Activated CD4-positive, alpha-beta memory T cell treated with anti-CD3 and anti-CD28 coated beads for 36 hours (primary cell): ENCODE measurements at regions of chr11 and their contacts with region 1.

Region 1: GRCh38 chr11:125111343-125112207 is at the start of gene TMEM218:
- DNase-seq: peak; percentile 98
- H3K4me3 Mint-ChIP-seq: peak within 1 kb of the TSS; percentile 88
- H3K27ac Mint-ChIP-seq: peak within 1 kb of the TSS; percentile 82
- H3K4me1 Mint-ChIP-seq: peaks cover 13% of the 10 kb centered on the region
- H3K27me3 Mint-ChIP-seq: no peaks in the 10 kb centered on the region
- total RNA-seq, gene TMEM218: 12.8 to 14.8 TPM

Region 2: DNA sequence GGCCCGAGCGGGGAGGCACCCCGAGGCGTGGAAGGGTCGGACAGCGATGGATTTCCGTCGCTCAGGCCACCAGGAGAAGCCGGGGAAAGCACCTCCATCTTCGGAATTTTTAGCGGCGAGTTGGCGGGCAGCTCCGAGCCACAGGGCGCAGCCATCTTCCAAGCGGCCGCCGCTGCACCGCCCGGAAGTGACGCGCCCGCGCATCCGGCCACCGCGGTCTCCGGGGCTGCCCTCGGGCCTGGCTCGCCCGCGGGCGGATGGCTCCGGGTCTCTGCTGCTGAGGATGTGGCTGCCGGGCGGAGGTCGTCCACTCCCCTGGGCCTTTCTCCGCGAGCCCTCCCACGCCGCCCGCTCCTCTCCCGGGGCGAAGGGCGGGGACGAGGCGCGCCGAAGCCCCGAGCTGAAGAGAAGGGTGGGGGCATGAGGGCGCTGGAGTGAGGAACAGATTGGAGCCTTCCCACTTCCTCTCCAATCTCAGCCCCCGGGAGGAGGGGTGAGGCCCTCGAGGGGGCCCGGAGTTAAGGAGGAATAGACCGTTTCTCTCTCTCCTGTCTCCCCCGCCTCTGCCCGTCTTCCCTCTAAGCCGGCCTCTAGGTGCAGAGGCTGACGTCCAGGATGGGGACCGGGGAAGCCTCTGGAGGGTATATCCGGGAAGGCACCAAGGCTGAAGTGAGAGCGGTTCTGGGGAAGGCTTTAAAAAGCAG is 311.2 kb before region 1 on chr11 and contains the start of gene MSANTD2:
- CTCF ChIA-PET with region 1: no interaction called
- POLR2A ChIA-PET with region 1: no interaction called
- intact Hi-C with region 1: loop called (anchors 1 kb)
- DNase-seq: peak; percentile 87
- H3K4me3 Mint-ChIP-seq: peak within 1 kb of the TSS; percentile 89
- H3K27ac Mint-ChIP-seq: peak within 1 kb of the TSS; percentile 94
- H3K4me1 Mint-ChIP-seq: peaks cover 29% of the 10 kb centered on the region
- H3K27me3 Mint-ChIP-seq: no peaks in the 10 kb centered on the region
- total RNA-seq, gene MSANTD2: 6.1 to 6.4 TPM

Region 3: DNA sequence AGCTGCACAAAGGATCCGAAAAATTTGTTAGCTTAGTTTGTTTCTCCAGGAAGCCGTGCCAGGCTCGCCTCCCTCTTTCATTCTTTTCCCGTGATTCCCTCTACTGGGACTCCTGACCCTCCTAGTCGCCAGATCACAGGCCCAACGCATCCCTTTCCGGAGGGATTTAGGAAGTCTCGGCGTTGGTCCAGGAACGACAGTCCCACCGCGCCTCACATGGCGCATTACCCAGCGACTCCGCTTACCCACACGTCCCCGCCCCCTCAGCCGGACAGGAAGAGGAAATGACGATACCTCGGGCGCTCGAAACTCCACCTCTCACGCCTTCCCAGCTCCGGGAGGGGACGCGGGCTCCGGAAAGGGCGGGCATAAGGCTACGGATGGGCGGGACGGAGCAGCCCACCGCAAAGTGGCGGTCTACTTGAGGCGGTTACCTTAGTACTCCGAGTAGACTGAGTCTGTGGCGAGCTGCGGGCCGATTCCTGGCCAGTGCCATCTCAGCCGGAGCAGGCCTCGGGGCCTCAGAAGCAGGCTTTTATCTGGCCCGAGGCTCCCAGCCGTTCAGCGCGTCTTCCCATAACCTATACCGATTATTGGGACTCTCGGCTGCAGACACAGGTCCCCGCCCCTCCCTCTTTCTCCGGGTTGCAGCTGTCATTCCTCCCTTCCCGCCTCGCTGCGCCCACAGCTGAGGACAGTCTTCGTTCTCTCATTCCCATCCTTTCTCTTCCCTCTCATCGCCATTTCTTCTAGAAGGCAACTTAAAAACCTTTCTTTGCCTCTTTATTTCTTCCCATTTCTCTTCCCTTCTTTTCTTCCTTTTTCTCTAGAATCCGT is 157.6 kb before region 1 on chr11 and contains the start of gene CCDC15:
- CTCF ChIA-PET with region 1: no interaction called
- POLR2A ChIA-PET with region 1: interaction called, 12 read pairs
- intact Hi-C with region 1: loop called (anchors 1 kb)
- DNase-seq: peak; percentile 97
- H3K4me3 Mint-ChIP-seq: no peak within 1 kb of the TSS
- H3K27ac Mint-ChIP-seq: no peak within 1 kb of the TSS
- H3K4me1 Mint-ChIP-seq: peaks cover 8% of the 10 kb centered on the region
- H3K27me3 Mint-ChIP-seq: no peaks in the 10 kb centered on the region
- total RNA-seq, gene CCDC15: 5.6 to 6.4 TPM

Region 4: GRCh38 chr11:125020342-125020741 is 91.2 kb before region 1 on chr11:
- CTCF ChIA-PET with region 1: no interaction called
- POLR2A ChIA-PET with region 1: no interaction called
- intact Hi-C with region 1: no loop called
- DNase-seq: no peak
- H3K4me3 Mint-ChIP-seq: no peak overlapping the region
- H3K27ac Mint-ChIP-seq: no peak overlapping the region
- H3K4me1 Mint-ChIP-seq: no peaks in the 10 kb centered on the region
- H3K27me3 Mint-ChIP-seq: no peaks in the 10 kb centered on the region

Region 5: GRCh38 chr11:125123947-125124617 is 12.5 kb after region 1 on chr11:
- CTCF ChIA-PET with region 1: interaction called, 34 read pairs
- POLR2A ChIA-PET with region 1: interaction called, 9 read pairs
- intact Hi-C with region 1: no loop called
- DNase-seq: peak; percentile 61
- H3K4me3 Mint-ChIP-seq: no peak overlapping the region
- H3K27ac Mint-ChIP-seq: no peak overlapping the region
- H3K4me1 Mint-ChIP-seq: peaks cover 6% of the 10 kb centered on the region
- H3K27me3 Mint-ChIP-seq: peaks cover 15% of the 10 kb centered on the region

Region 6: GRCh38 chr11:125156346-125157117 is 45.0 kb after region 1 on chr11:
- CTCF ChIA-PET with region 1: no interaction called
- POLR2A ChIA-PET with region 1: no interaction called
- intact Hi-C with region 1: no loop called
- DNase-seq: no peak
- H3K4me3 Mint-ChIP-seq: no peak overlapping the region
- H3K27ac Mint-ChIP-seq: no peak overlapping the region
- H3K4me1 Mint-ChIP-seq: no peaks in the 10 kb centered on the region
- H3K27me3 Mint-ChIP-seq: peaks cover 28% of the 10 kb centered on the region

Region 7: DNA sequence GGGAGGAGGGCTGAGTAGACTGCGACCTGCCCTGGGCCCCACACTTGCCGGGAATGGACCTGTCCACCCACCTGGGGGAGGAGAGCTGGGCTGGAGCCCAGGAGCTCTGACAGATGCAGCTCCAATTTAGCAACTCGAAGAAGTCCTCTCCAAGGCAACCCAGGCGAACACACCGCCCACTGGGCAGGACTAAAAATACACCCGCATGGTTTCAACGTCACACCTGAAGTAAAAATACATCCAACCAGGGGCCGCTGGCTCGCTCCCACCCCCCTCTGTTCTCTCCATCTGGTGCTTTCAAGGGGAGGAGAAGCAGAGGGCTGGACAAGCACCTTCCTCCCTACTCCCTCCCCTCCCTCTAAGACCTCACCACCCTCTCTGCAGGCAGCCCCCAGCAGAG is 264.5 kb after region 1 on chr11:
- CTCF ChIA-PET with region 1: no interaction called
- POLR2A ChIA-PET with region 1: no interaction called
- intact Hi-C with region 1: no loop called
- DNase-seq: no peak
- H3K4me3 Mint-ChIP-seq: no peak overlapping the region
- H3K27ac Mint-ChIP-seq: no peak overlapping the region
- H3K4me1 Mint-ChIP-seq: no peaks in the 10 kb centered on the region
- H3K27me3 Mint-ChIP-seq: peaks cover 27% of the 10 kb centered on the region

Region 8: DNA sequence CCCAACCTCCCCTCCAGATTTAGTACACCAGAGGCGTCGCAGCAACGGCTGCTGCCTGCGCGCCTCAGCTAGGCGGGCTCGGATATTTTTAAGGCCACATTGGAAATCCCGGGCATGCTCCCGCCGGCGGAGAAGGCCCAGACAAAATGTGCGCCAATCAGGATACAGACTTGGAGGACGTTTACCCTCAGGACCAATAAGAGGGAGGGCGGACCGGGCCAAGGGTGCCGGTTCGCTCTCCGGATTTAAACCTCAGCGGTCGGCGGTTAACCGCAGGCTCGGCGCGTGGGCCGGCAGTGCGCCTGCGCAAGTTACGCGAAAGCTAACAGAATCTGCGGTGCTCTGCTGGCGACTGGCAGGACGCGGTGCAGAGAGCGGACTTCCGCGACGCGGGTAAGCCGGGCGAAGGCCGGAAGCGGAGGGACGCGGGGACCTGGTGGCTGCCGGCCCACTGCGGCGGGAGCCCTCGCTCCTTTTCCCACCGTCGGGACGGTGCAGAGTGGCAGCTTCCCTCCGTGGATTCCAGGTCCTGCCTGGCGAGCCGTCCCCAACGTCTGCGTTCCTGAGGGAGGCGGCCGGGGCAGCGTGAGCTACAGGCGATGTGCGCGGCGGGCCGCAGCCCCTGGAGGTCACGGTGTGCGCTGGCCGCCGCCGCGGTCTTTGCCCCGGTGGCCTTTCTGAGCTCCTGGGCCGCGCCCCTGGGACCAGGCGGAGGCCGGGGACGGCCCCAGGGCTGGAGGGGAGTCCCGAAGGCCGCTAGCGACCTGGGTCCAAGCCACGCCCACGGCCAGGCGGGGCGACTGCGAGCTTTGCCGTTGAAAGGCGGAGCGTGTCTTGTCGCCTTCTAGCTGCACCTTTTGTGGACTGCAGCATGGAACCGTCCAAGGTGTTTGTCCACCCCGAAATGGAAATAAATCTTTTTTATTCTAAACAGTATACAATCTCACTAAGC is 776.1 kb after region 1 on chr11 and contains the start of gene HYLS1:
- CTCF ChIA-PET with region 1: no interaction called
- POLR2A ChIA-PET with region 1: interaction called, 3 read pairs
- intact Hi-C with region 1: loop called (anchors 1 kb)
- DNase-seq: peak; percentile 99
- H3K4me3 Mint-ChIP-seq: peak within 1 kb of the TSS; percentile 74
- H3K27ac Mint-ChIP-seq: peak within 1 kb of the TSS; percentile 93
- H3K4me1 Mint-ChIP-seq: peaks cover 31% of the 10 kb centered on the region
- H3K27me3 Mint-ChIP-seq: peaks cover 6% of the 10 kb centered on the region
- total RNA-seq, gene HYLS1: 8.2 to 8.3 TPM